Common myeloid progenitor, CD34-positive (primary cell): ENCODE measurements at regions of chr2 and their contacts with region 1.

Region 1: GRCh38 chr2:74690571-74690970 is 36.5 kb downstream of the SEMA4F start:
- DNase-seq: peak; percentile 59 to 81 (median 70)
- H3K4me3 ChIP-seq: no peak overlapping the region
- H3K27ac ChIP-seq: no peak overlapping the region
- H3K4me1 ChIP-seq: peaks cover 0 to 11% (median 2%) of the 10 kb centered on the region in 4 experiments
- H3K27me3 ChIP-seq: no peaks in the 10 kb centered on the region

Region 2: GRCh38 chr2:74715078-74715791 is 24.7 kb after region 1 on chr2:
- CTCF ChIA-PET with region 1: interaction called, 29 read pairs
- POLR2A ChIA-PET with region 1: no interaction called
- DNase-seq: peak; percentile 75 to 87 (median 84)
- H3K4me3 ChIP-seq: peak overlapping the region; percentile 27 to 78 (median 71)
- H3K27ac ChIP-seq: no peak overlapping the region
- H3K4me1 ChIP-seq: peaks cover 0 to 9% (median 5%) of the 10 kb centered on the region in 4 experiments
- H3K27me3 ChIP-seq: peaks cover 0 to 6% (median 0%) of the 10 kb centered on the region in 5 experiments

Region 3: DNA sequence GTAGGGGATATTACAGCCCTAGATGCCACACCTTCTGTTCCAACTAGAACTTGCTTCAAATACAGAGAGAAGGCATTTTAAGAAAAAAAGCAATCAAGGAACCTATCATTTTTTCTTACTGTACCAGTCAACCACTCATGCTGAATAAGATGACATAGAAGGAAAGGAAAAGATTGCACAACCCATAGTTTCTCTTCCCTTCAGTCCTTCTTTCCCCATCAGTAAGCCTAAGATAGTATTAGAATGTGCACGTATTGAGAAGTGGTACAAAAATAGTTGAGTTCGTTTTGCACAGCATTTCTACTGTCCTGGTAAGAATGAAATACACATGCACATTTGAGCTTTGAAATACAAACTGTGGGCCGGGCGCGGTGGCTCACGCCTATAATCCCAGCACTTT is 116.3 kb after region 1 on chr2:
- CTCF ChIA-PET with region 1: no interaction called
- POLR2A ChIA-PET with region 1: no interaction called
- DNase-seq: no peak
- H3K4me3 ChIP-seq: no peak overlapping the region
- H3K27ac ChIP-seq: no peak overlapping the region
- H3K4me1 ChIP-seq: no peaks in the 10 kb centered on the region
- H3K27me3 ChIP-seq: no peaks in the 10 kb centered on the region

Region 4: GRCh38 chr2:74886811-74887210 is 196.2 kb after region 1 on chr2:
- CTCF ChIA-PET with region 1: interaction called, 13 read pairs
- POLR2A ChIA-PET with region 1: no interaction called
- DNase-seq: no peak
- H3K4me3 ChIP-seq: no peak overlapping the region
- H3K27ac ChIP-seq: no peak overlapping the region
- H3K4me1 ChIP-seq: peaks cover 0 to 9% (median 2%) of the 10 kb centered on the region in 4 experiments
- H3K27me3 ChIP-seq: no peaks in the 10 kb centered on the region

Region 5: DNA sequence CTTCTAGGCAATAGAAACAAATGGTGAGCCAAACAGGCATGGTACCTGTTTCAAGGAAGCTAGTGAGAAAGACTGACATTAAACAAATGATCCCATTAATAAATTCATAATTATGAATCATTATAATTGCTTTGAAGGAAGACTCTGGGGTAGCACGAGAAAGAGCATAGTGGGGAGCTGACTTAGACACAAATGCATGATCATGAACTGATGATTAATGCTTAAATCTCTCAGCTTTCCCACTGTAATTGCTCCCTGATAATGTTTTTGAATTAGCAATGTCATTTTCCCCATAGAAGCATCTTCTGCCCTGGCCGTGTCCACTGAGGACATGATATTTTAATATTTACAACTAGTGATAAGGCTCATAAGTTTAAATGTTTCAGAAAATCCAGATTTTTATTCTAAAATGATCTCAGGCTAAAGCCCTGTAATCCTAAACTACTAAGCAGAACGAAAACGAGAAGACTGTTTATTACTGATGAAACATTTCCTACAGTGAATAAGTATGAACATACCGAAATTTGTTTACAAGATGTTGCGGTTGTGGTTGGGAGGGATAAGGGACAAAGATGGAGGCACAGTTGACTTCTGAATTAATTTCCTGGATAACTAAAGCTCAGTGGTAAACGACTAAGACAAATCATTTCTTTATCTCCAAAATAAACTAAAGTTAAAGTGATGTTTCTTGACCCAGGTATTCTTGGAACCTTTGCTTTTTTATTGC is 556.0 kb after region 1 on chr2:
- CTCF ChIA-PET with region 1: no interaction called
- POLR2A ChIA-PET with region 1: no interaction called
- DNase-seq: no peak
- H3K4me3 ChIP-seq: no peak overlapping the region
- H3K27ac ChIP-seq: no peak overlapping the region
- H3K4me1 ChIP-seq: no peaks in the 10 kb centered on the region
- H3K27me3 ChIP-seq: no peaks in the 10 kb centered on the region